Activated CD4-positive, alpha-beta T cell treated with anti-CD3 and anti-CD28 coated beads for 36 hours (primary cell): ENCODE measurements at regions of chr11 and their contacts with region 1.

Region 1: DNA sequence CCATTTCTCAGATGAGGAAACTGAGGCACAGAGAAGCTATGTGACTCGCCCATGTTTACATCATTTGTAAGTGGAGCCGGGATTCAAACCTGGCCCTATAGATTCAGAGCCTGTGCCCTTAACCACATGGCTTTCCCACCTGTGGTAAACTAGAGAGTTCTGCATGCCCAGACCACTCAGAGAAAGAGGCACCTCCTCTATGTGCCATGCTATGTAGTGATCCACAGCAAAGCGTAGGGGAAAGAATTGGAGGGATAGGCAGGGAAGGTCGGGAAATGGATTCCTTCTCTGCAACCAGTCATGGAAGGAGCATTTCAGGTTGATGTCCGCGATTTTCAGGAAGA is 15.4 kb upstream of the POU2AF2 start:
- DNase-seq: peak; percentile 10
- ATAC-seq: peak; percentile 73
- H3K4me3 Mint-ChIP-seq: no peak overlapping the region
- H3K27ac Mint-ChIP-seq: no peak overlapping the region
- H3K4me1 Mint-ChIP-seq: peaks cover 9% of the 10 kb centered on the region
- H3K27me3 Mint-ChIP-seq: peaks cover 17% of the 10 kb centered on the region

Region 2: GRCh38 chr11:110447897-110448745 is 782.0 kb before region 1 on chr11:
- CTCF ChIA-PET with region 1: interaction called, 18 read pairs
- POLR2A ChIA-PET with region 1: no interaction called
- intact Hi-C with region 1: loop called (anchors 1 to 5 kb)
- DNase-seq: no peak
- ATAC-seq: no peak
- H3K4me3 Mint-ChIP-seq: no peak overlapping the region
- H3K27ac Mint-ChIP-seq: no peak overlapping the region
- H3K4me1 Mint-ChIP-seq: peaks cover 18% of the 10 kb centered on the region
- H3K27me3 Mint-ChIP-seq: no peaks in the 10 kb centered on the region

Region 3: DNA sequence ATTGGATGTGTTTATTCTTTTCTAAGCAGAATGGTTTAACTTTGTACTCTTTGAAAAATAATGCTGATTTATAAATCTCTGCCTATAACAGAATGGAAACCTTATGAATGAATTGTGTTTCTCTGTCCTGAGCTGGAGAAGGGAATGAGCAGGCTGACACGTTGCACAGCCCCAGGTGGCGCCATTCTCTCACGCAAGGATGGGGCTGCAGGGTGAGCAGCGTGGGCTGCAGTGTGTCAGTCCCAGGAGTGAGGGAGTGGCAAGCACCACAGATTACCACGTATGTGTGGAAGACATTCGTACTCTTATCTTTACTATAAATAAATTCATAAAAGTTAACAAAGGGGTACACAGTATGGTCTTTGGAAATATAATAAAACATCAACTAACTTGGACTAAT is 766.9 kb before region 1 on chr11:
- CTCF ChIA-PET with region 1: interaction called, 3 read pairs
- POLR2A ChIA-PET with region 1: no interaction called
- intact Hi-C with region 1: loop called in 1 of 2 experiments (anchors 1 kb)
- DNase-seq: peak; percentile 67
- ATAC-seq: no peak
- H3K4me3 Mint-ChIP-seq: no peak overlapping the region
- H3K27ac Mint-ChIP-seq: no peak overlapping the region
- H3K4me1 Mint-ChIP-seq: no peaks in the 10 kb centered on the region
- H3K27me3 Mint-ChIP-seq: no peaks in the 10 kb centered on the region

Region 4: DNA sequence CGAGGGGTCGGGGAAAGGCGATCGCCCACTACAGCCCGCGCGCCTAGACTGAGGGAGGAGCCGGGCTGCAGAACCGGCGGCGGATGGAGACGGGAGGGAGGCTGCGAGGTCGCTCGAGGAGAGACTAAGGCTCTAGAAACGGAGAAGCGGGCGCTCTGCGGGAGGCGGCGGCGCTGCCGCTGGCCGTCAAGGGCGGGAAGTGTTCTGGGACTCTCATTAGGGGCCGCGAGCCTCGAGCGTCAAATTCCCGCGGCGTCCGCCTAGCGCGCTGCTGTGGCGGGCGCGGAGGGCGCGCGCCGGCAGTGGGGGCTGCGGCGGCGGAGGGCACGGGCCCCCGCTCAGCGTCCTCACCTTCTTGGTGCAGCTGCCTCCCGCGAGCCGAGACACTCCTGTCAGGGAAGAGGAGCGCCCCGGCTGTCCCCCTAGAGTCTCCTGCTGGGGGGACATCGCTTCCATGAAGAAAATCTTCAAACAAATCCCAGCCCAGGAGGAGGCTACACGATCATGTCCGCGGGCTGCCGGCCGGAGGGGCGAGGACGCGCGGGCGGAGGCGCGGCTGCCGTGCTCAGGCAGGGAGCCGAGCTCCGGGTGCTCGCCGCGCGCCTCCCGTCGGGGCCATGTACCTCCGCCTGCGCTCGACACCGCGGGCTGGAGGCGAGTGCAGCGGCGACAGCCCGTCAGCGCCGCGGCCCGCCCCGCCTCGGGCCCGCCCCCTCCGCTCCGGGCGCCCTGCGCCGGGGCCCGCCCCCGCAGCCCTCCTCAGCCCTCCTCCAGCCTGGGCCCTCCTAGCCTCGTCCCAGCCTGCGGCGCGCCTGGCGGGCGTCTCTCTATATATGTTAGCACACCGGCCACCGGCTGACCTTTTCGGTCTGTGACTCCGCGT is 518.1 kb before region 1 on chr11 and contains the start of gene ARHGAP20:
- CTCF ChIA-PET with region 1: no interaction called
- POLR2A ChIA-PET with region 1: no interaction called
- intact Hi-C with region 1: loop called in 1 of 2 experiments (anchors 1 kb)
- DNase-seq: peak; percentile 77
- ATAC-seq: peak; percentile 91
- H3K4me3 Mint-ChIP-seq: peak within 1 kb of the TSS; percentile 62
- H3K27ac Mint-ChIP-seq: no peak within 1 kb of the TSS
- H3K4me1 Mint-ChIP-seq: peaks cover 11% of the 10 kb centered on the region
- H3K27me3 Mint-ChIP-seq: peaks cover 57% of the 10 kb centered on the region
- total RNA-seq, gene ARHGAP20: 0.43 to 0.46 TPM

Region 5: DNA sequence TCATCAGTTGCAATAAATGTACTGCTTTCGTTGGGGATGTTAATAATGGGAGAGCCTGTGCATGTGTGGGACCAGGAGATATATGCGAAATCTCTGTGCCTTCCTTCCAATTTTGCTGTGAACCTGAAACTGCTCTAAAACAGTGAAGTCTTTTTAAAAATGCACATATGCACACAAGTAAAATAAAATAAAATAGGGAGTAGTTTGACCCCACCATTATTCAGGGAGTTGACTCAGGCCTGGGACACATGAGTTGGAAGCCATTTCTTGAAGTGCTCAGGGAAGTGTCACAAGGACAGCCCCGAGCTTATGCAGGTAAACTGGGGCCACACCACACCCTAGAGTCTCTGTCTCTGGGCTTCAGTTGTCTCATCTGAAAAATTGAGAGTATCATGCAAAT is 167.7 kb before region 1 on chr11:
- CTCF ChIA-PET with region 1: no interaction called
- POLR2A ChIA-PET with region 1: no interaction called
- intact Hi-C with region 1: no loop called
- DNase-seq: no peak
- ATAC-seq: no peak
- H3K4me3 Mint-ChIP-seq: no peak overlapping the region
- H3K27ac Mint-ChIP-seq: no peak overlapping the region
- H3K4me1 Mint-ChIP-seq: no peaks in the 10 kb centered on the region
- H3K27me3 Mint-ChIP-seq: peaks cover 2% of the 10 kb centered on the region

Region 6: GRCh38 chr11:111213256-111213655 is 16.8 kb before region 1 on chr11:
- CTCF ChIA-PET with region 1: interaction called, 13 read pairs
- POLR2A ChIA-PET with region 1: no interaction called
- intact Hi-C with region 1: no loop called
- DNase-seq: no peak
- ATAC-seq: no peak
- H3K4me3 Mint-ChIP-seq: no peak overlapping the region
- H3K27ac Mint-ChIP-seq: no peak overlapping the region
- H3K4me1 Mint-ChIP-seq: no peaks in the 10 kb centered on the region
- H3K27me3 Mint-ChIP-seq: peaks cover 4% of the 10 kb centered on the region

Region 7: GRCh38 chr11:111417766-111418435 is 187.8 kb after region 1 on chr11:
- CTCF ChIA-PET with region 1: no interaction called
- POLR2A ChIA-PET with region 1: no interaction called
- intact Hi-C with region 1: no loop called
- DNase-seq: no peak
- ATAC-seq: no peak
- H3K4me3 Mint-ChIP-seq: no peak overlapping the region
- H3K27ac Mint-ChIP-seq: no peak overlapping the region
- H3K4me1 Mint-ChIP-seq: peaks cover 44% of the 10 kb centered on the region
- H3K27me3 Mint-ChIP-seq: no peaks in the 10 kb centered on the region